ENCODE measurements at regions of chr10 and their contacts with region 1.

Region 1: DNA sequence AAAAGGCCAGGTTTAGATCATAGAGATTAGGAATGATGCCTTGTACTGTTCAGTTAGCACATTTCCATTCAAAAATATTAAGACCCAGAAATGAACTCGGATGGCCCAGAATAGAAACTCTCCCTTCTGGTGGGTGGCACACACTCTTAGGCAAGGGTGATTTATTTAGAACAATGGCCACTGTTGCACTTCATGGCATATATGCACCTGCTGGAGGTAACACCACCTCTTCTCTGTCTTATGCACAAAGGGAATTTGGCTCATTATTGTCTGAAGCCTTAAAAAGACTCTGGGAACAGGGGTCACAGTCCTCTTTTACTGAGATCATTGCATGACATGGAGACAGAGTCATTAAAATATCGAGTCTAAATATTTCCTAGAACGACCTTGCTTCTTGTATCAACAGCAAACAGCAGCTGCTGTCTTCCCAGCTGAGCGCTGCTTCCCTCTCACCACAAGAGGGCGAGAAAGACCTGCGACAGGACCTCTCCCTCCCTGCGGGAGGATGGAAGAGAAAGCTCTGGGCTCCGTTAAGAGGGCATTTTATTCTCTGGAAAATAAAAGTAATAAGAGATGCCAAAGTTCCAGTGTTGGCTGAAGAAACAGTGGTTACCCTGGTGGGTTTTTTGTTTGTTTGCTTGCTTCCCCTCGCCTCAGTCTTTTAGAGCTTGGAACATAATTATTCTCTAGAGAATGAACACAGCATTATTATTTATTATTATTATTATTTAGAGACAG is 13.6 kb upstream of the BAMBI start:
- DNase-seq: peak; percentile 77
- ATAC-seq: peak; percentile 79
- H3K4me3 Mint-ChIP-seq: no peak overlapping the region
- H3K27ac Mint-ChIP-seq: no peak overlapping the region
- H3K4me1 Mint-ChIP-seq: peaks cover 5% of the 10 kb centered on the region
- H3K27me3 Mint-ChIP-seq: peaks cover 31% of the 10 kb centered on the region

Region 2: GRCh38 chr10:28652696-28653095 is 11.0 kb before region 1 on chr10:
- CTCF ChIA-PET with region 1: interaction called, 15 read pairs
- POLR2A ChIA-PET with region 1: no interaction called
- DNase-seq: no peak
- ATAC-seq: no peak
- H3K4me3 Mint-ChIP-seq: no peak overlapping the region
- H3K27ac Mint-ChIP-seq: no peak overlapping the region
- H3K4me1 Mint-ChIP-seq: no peaks in the 10 kb centered on the region
- H3K27me3 Mint-ChIP-seq: peaks cover 8% of the 10 kb centered on the region